ENCODE measurements at regions of chr1 and their contacts with region 1.

Region 1: GRCh38 chr1:161225534-161226319 is at the start of gene TOMM40L:
- DNase-seq: peak; percentile 80 to 93 (median 85)
- H3K4me3 ChIP-seq: peak within 1 kb of the TSS; percentile 58
- H3K27ac ChIP-seq: peak within 1 kb of the TSS in 1 of 2 donors; percentile 49
- H3K4me1 ChIP-seq: peaks cover 5% of the 10 kb centered on the region
- H3K27me3 ChIP-seq: no peaks in the 10 kb centered on the region
- CTCF ChIP-seq: peak; percentile 34 to 68 (median 62)
- EP300 ChIP-seq: no peak
- POLR2A ChIP-seq: peak; percentile 10
- total RNA-seq, gene TOMM40L: 2.4 to 15.2 (median 7.5) TPM

Region 2: GRCh38 chr1:161192476-161193465 is 33.0 kb before region 1 on chr1:
- intact Hi-C with region 1: loop called in 1 of 4 experiments (anchors 5 kb)
- DNase-seq: peak in 4 of 5 donors; percentile 55 to 79 (median 69)
- H3K4me3 ChIP-seq: no peak overlapping the region
- H3K27ac ChIP-seq: no peak overlapping the region
- H3K4me1 ChIP-seq: peaks cover 7% of the 10 kb centered on the region
- H3K27me3 ChIP-seq: no peaks in the 10 kb centered on the region
- CTCF ChIP-seq: peak; percentile 55 to 75 (median 71)
- EP300 ChIP-seq: no peak
- POLR2A ChIP-seq: no peak

Region 3: DNA sequence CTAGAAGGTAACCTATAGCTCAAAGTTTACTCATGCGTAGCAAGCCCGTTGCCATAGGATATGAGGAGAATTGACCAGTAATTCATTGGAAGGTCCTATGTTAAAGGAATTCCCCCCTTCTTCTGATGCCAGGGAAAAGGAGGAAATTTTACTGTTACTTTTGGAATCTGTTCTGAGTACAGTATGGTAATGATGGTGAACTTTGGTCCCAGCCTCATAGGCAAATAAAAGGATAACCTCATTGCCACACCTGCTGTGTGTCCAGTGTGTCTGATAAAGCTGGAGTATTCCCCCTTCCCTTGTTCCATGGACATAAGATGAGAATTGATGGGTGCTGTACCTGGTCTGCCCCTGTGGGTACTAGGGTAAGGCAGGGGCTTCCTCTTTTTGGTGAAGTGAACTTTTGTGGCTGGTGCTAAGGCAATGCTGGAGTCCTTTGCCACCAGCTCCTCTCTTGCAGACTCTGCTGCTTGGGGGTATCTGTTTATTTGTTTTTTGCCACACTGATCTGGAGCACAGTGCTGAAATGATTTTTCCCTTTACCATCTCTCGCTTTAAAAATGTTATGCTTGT is 61.8 kb after region 1 on chr1:
- intact Hi-C with region 1: loop called in 1 of 4 experiments (anchors 5 kb)
- DNase-seq: no peak
- H3K4me3 ChIP-seq: no peak overlapping the region
- H3K27ac ChIP-seq: no peak overlapping the region
- H3K4me1 ChIP-seq: no peaks in the 10 kb centered on the region
- H3K27me3 ChIP-seq: no peaks in the 10 kb centered on the region
- CTCF ChIP-seq: no peak
- EP300 ChIP-seq: no peak
- POLR2A ChIP-seq: no peak

Region 4: DNA sequence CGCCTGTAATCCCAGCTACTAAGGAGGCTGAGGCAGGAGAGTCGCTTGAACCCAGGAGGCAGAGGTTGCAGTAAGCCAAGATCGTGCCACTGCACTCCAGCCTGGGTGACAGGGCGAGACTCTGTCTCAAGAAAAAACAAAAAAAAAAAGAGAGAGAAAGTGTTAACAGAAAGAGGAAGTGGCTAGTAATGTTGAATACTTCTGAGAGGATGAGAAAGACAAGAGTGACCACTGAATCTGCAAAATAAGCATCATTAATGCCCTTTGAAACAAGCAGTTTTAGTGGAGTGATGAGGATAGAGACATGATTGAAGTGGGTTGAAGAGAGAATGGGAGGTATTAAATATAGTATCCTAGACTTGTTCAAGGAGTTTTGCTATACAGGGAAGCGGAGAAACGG is 72.4 kb after region 1 on chr1:
- intact Hi-C with region 1: loop called in 2 of 4 experiments (anchors 2 to 10 kb)
- DNase-seq: no peak
- H3K4me3 ChIP-seq: no peak overlapping the region
- H3K27ac ChIP-seq: no peak overlapping the region
- H3K4me1 ChIP-seq: no peaks in the 10 kb centered on the region
- H3K27me3 ChIP-seq: no peaks in the 10 kb centered on the region
- CTCF ChIP-seq: no peak
- EP300 ChIP-seq: no peak
- POLR2A ChIP-seq: no peak

Region 5: GRCh38 chr1:161305867-161306519 is 80.3 kb after region 1 on chr1:
- intact Hi-C with region 1: loop called in 1 of 4 experiments (anchors 10 kb)
- DNase-seq: peak; percentile 74 to 85 (median 80)
- H3K4me3 ChIP-seq: peak overlapping the region; percentile 74
- H3K27ac ChIP-seq: no peak overlapping the region
- H3K4me1 ChIP-seq: peaks cover 8% of the 10 kb centered on the region
- H3K27me3 ChIP-seq: no peaks in the 10 kb centered on the region
- CTCF ChIP-seq: no peak
- EP300 ChIP-seq: no peak
- POLR2A ChIP-seq: no peak

Region 6: GRCh38 chr1:161389691-161390558 is 164.2 kb after region 1 on chr1:
- intact Hi-C with region 1: loop called in 2 of 4 experiments (anchors 10 kb)
- DNase-seq: peak; percentile 98 to 99 (median 99)
- H3K4me3 ChIP-seq: peak overlapping the region; percentile 77
- H3K27ac ChIP-seq: peak overlapping the region; percentile 63 to 82
- H3K4me1 ChIP-seq: no peaks in the 10 kb centered on the region
- H3K27me3 ChIP-seq: no peaks in the 10 kb centered on the region
- CTCF ChIP-seq: no peak
- EP300 ChIP-seq: peak; percentile 100
- POLR2A ChIP-seq: peak; percentile 99

Measured in ovary (tissue), 10 donors.